ENCODE measurements at regions of chr9 and their contacts with region 1.

Region 1: DNA sequence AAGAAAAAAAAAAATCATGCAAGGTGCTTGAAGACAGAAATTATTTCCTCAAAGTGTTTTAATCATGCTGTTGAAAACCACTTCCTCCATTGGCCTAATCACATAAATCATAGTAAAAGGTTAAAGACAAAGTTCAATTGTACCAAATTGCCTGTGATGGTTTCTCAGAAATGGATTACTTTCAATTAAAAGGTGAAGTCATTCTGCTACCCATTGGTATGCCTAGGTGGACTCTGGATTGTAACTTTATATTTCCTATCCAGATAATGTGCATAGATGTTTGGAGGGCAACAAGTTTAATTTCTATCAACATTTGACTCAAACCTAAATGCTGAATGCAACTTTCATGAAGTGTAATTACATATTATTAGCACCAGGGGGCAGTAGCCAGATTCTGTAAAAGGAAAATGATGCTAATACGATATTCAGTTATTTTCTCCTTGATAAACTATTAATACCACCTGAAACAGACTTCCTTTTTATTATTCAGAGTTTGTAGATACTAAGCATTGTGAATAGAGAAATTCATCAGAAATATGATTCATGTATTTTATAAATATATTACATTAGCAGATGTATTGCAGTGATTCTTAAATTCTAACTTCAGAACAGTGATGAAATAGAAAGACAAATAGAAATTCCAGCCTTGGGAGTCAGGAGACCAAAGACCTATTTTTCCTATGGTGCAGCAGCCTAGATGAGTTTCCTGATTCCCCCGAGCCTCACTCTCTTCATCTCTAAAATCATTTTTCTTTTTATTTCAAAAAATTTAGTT is 148.2 kb downstream of the CAAP1 start:
- DNase-seq: no peak
- ATAC-seq: peak; percentile 35
- H3K4me3 ChIP-seq: no peak overlapping the region
- H3K27ac ChIP-seq: no peak overlapping the region
- H3K4me1 ChIP-seq: no peaks in the 10 kb centered on the region
- H3K27me3 ChIP-seq: no peaks in the 10 kb centered on the region
- CTCF ChIP-seq: peak; percentile 49 to 80 (median 63)
- POLR2A ChIP-seq: no peak

Region 2: DNA sequence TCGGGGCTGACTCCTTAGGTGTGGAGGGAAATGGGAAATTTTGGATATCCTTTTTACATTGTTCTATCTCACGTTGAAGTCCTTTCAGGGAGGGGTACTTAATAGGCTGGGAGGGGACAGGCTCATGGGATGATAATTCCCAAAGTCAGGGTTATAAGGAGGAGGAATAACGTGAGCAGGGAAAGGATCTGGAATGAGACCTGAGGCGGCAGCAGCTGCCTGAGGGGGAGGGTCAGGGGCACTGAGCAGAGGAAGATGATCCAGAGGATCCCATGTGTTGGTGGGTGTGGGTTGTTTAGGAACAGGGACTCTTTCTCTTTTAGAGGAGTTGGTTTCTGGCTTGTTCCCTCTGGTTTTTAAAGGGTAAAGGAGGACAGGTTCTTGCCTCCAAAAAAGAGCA is 230.5 kb after region 1 on chr9:
- intact Hi-C with region 1: loop called (anchors 5 kb)
- DNase-seq: no peak
- ATAC-seq: no peak
- H3K4me3 ChIP-seq: no peak overlapping the region
- H3K27ac ChIP-seq: no peak overlapping the region
- H3K4me1 ChIP-seq: peaks cover 6% of the 10 kb centered on the region
- H3K27me3 ChIP-seq: no peaks in the 10 kb centered on the region
- CTCF ChIP-seq: no peak
- POLR2A ChIP-seq: no peak

Measured in body of pancreas (tissue), 4 donors.